ENCODE measurements at regions of chr2 and their contacts with region 1.

Region 1: DNA sequence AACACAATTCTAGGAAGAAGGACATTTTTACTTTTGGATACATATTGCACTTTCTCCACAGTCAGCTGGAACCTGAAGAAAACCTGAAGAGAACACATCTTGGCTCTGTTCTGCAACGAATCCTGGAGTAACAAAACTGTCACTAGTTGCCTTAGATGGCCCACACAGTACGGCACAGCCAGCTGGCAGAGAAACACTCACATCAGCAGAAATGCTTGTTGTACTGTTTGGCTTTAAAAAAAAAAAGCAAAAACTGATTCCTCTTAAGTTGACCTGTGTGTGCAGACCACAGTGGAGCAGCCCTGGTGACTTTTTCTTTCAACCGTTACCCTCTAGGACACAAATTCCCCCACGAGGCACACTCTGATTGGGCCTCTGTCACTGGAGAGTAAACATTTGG is 152.3 kb upstream of the TWIST2 start:
- DNase-seq: no peak
- H3K4me3 ChIP-seq: no peak overlapping the region
- H3K27ac ChIP-seq: no peak overlapping the region
- H3K4me1 ChIP-seq: no peaks in the 10 kb centered on the region
- H3K27me3 ChIP-seq: no peaks in the 10 kb centered on the region
- CTCF ChIP-seq: no peak

Region 2: DNA sequence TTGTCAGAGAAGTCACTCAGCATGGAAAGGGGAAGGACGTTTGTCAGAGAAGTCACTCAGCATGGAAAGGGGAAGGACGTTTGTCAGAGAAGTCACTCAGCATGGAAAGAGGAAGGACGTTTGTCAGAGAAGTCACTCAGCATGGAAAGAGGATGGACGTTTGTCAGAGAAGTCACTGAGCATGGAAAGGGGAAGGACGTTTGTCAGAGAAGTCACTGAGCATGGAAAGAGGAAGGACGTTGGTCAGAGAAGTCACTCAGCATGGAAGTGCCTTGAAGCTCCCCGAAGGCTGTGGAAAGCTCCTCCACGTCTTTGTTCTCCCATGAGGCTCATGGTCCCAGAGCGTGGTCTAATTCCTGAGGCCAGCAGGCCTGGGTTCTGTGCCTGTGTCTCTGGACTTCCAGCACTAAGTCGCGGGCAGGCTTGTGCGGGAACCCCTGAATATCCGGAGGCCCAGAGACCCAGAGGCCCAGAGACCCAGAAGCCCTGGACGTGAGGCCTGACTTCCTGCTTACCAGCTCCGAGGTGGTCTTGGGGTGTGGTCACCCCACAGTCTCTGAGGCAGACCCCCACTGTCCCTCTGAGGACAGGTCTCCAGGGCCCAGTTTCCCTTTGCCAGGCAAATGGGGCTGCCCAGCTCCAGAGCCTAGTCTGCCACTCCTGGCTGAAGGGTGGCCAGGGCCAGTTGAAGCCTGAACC is 82.0 kb after region 1 on chr2:
- CTCF ChIA-PET with region 1: no interaction called
- dilution Hi-C with region 1: loop called (anchors 5 kb)
- in situ Hi-C with region 1: no loop called
- intact Hi-C with region 1: no loop called
- DNase-seq: no peak
- H3K4me3 ChIP-seq: no peak overlapping the region
- H3K27ac ChIP-seq: no peak overlapping the region
- H3K4me1 ChIP-seq: no peaks in the 10 kb centered on the region
- H3K27me3 ChIP-seq: no peaks in the 10 kb centered on the region
- CTCF ChIP-seq: no peak

Measured in mammary epithelial cell (primary cell).